ENCODE measurements at regions of chr17 and their contacts with region 1.

Region 1: DNA sequence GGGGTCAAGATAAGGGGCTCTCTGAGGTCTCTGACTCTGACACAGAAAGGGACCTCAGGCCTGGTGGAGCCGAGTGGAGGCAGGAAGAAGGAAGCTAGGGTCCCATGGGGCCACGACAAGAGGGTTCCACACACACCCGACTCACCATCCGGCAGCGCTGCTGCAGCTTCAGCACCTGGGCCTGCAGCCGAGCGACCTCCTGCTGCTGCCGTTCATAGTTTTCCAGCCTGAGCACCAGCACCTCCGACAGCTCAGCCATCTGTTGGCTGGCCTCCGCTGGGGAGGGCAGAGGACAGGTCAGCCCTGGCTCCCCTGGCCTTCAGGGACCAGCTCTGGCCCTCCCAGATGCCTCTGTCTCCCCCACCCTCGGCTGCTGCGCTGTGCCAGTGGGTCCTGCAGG is 6.4 kb downstream of the HAP1 start:
- DNase-seq: no peak
- H3K4me3 ChIP-seq: no peak overlapping the region
- H3K27ac ChIP-seq: no peak overlapping the region
- H3K4me1 ChIP-seq: no peaks in the 10 kb centered on the region
- H3K27me3 ChIP-seq: peaks cover 12% of the 10 kb centered on the region
- CTCF ChIP-seq: no peak

Region 2: DNA sequence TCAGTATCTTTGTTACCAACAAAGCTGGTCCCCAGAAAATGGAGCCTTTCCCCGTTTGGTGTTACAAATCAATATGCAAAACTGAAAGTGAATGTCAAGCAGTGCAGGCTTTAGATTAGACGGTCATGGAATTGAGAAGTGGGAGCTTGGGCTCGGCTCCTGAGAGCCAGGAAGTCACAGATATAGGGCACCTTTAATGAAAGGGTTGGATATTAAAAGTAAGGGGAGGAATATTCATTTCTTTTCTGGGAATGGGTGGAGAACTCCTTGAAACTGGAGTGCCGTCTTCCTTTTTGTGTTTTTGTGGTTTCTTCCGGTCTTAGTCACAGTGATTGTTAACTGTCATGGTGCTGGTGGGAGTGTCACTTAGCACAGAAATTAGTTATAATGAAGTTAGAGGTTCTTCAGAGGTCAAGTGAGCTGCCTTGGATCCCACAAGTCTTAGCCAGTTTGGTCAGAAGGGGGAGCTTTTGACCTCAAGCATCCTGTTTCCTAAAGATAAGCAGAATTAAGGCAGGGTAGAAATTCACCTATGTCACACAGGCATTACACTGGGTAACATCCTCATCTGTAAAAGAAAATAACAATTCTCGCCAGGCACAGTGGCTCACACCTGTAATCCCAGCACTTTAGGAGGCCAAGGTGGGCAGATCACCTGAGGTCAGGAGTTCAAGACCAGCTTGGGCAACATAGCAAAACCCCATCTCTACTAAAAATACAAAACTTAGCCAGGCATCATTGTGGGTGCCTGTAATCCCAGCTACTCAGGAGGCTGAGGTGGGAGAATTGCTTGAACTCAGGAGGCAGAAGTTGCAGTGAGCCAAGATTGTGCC is 48.9 kb before region 1 on chr17:
- CTCF ChIA-PET with region 1: no interaction called
- POLR2A ChIA-PET with region 1: no interaction called
- intact Hi-C with region 1: no loop called
- DNase-seq: peak; percentile 67 to 88
- H3K4me3 ChIP-seq: peak overlapping the region; percentile 50
- H3K27ac ChIP-seq: peak overlapping the region; percentile 94
- H3K4me1 ChIP-seq: peaks cover 24% of the 10 kb centered on the region
- H3K27me3 ChIP-seq: no peaks in the 10 kb centered on the region
- CTCF ChIP-seq: peak; percentile 28; the same call in 1 of the 2 replicates

Region 3: GRCh38 chr17:42227849-42228615 is 500.0 kb after region 1 on chr17:
- CTCF ChIA-PET with region 1: no interaction called
- POLR2A ChIA-PET with region 1: interaction called, 11 read pairs
- intact Hi-C with region 1: no loop called
- DNase-seq: no peak
- H3K4me3 ChIP-seq: no peak overlapping the region
- H3K27ac ChIP-seq: peak overlapping the region; percentile 17; the same call in 1 of the 2 replicates
- H3K4me1 ChIP-seq: 0 out of 2 replicates have a peak, but pooled peaks cover 3% of the 10 kb centered on the region
- H3K27me3 ChIP-seq: no peaks in the 10 kb centered on the region
- CTCF ChIP-seq: no peak